Panc1 (cell line): ENCODE measurements at regions of chr15 and their contacts with region 1.

Region 1: DNA sequence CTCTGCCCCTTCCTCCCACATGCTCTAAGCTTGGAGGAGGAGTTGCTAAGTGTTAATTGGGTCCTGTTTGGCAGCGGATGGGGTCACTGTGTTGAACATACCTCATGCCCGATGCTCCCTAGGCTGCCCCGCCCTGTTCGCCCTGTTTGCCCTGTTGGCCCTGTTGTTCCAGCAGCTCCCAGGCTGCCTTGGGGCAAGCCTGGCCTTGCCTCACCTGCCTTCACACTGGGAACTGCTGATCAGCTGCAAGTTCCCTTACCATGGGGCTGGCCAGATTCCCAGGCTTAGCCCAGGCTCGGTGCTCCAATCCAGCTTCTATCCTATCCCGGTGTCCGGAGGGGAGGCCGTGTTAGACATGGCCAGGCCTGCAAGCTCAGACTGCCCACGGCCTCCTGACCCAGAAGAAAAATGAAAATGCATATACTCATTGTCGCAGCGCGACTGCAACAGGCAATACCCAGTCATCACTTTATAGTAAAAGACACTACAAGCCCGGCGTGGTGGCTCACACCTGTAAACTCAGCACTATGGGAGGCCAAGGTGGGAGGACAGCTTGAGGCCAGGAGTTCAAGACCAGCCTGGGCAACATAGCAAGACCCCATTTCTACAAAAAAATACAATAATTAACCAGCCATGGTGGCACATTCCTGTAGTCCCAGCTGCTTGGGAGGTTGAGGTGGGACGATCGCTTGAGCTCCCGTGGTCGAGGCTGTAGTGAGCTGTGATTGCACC is 42.9 kb upstream of the ZNF710 start:
- DNase-seq: no peak
- ATAC-seq: peak; percentile 57; the same call in 1 of the 2 replicates
- H3K4me3 ChIP-seq: no peak overlapping the region
- H3K27ac ChIP-seq: no peak overlapping the region
- H3K4me1 ChIP-seq: no peaks in the 10 kb centered on the region
- H3K27me3 ChIP-seq: no peaks in the 10 kb centered on the region; the same call in 1 of the 2 replicates
- CTCF ChIP-seq: no peak

Region 2: DNA sequence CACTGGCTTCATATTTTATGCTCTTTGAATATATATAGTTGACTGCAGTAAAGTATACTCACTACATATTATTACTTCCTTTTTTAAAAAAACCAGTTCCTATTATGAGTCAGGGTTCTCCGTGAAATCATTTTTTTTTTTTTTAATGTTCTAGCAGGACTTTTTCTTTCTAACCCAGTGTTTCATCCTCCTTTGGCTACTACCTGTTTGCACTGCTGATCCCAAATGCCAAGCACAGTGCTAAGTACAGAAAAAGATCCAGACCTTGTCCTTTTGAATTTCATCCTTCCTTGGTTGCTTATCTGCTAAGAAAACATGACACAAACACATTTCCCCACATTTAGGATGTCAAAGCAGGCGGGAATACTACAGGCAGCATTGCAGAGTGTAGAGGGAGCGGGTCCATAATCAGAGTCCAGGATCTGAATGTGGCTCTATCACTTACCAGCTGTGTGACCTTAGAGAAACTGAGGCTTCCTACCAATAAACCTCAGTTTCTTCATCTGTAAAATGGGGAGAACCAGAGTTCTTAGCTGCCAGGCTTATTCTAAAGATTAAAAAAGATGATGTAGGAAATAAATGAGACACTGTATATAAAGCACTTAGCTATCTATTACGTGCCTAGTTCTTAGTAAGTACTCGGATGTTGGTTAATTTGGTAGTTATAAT is 106.4 kb before region 1 on chr15:
- CTCF ChIA-PET with region 1: interaction called, 12 read pairs
- POLR2A ChIA-PET with region 1: no interaction called
- in situ Hi-C with region 1: no loop called
- intact Hi-C with region 1: no loop called
- DNase-seq: no peak
- ATAC-seq: no peak
- H3K4me3 ChIP-seq: no peak overlapping the region
- H3K27ac ChIP-seq: no peak overlapping the region
- H3K4me1 ChIP-seq: peaks cover 9% of the 10 kb centered on the region
- H3K27me3 ChIP-seq: no peaks in the 10 kb centered on the region
- CTCF ChIP-seq: no peak

Region 3: DNA sequence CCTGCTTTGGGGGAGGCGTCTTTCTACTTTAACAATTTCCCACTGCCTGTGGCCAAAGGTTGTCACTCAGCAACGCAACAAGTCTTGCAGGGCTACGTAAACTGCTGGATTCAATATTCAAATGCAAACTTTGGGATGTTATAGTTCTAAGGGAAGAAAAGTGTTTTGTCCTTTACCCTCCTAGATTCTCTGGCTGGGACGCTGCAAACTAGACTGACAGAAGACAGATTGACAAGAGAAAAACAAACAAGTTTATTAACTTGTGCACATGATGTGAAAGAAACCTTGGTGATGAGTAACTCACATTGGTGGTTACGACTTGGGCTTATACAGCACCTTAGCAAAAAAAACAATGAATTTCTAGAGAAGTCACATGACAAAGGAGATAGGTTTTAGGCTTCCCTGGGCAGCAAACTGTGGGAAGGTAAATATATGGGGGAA is 11.4 kb before region 1 on chr15:
- CTCF ChIA-PET with region 1: interaction called, 10 read pairs
- POLR2A ChIA-PET with region 1: no interaction called
- in situ Hi-C with region 1: no loop called
- intact Hi-C with region 1: no loop called
- DNase-seq: no peak
- ATAC-seq: no peak
- H3K4me3 ChIP-seq: no peak overlapping the region
- H3K27ac ChIP-seq: no peak overlapping the region
- H3K4me1 ChIP-seq: no peaks in the 10 kb centered on the region
- H3K27me3 ChIP-seq: no peaks in the 10 kb centered on the region
- CTCF ChIP-seq: no peak